Common myeloid progenitor, CD34-positive (primary cell): ENCODE measurements at regions of chr2 and their contacts with region 1.

Region 1: GRCh38 chr2:229586746-229587705 is 127.3 kb downstream of the DNER start:
- DNase-seq: peak; percentile 17 to 49 (median 32)
- H3K4me3 ChIP-seq: no peak overlapping the region
- H3K27ac ChIP-seq: no peak overlapping the region
- H3K4me1 ChIP-seq: no peaks in the 10 kb centered on the region
- H3K27me3 ChIP-seq: peaks cover 0 to 15% (median 11%) of the 10 kb centered on the region in 5 experiments

Region 2: DNA sequence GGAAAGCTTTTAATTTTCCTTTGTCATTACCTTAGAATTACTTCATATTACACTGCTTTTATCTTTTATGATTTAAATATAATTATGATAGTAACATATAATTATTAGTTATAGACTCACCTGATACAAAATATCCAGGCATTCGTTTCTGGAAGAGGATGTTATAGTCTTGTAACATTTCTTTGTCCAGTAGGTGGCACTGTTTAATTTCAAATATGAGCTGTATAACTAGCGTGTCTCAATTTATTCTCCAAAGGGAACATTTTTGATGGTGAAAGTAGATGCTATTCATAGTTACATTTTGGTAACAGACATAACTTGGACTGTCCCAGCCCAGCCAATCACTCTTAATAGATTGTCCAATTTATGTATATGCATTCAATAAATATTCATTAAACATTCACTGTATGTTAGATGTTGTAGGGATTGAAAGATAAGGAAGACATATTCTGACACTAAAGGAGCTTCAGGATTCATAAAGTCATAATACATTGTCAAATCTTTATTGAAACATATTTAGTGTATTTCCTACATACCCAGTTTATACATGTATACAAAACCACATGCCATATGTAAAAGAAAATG is 1696.4 kb before region 1 on chr2:
- CTCF ChIA-PET with region 1: interaction called, 11 read pairs
- POLR2A ChIA-PET with region 1: no interaction called
- DNase-seq: peak; percentile 32 to 61 (median 50)
- H3K4me3 ChIP-seq: no peak overlapping the region
- H3K27ac ChIP-seq: no peak overlapping the region
- H3K4me1 ChIP-seq: no peaks in the 10 kb centered on the region
- H3K27me3 ChIP-seq: peaks cover 0 to 2% (median 0%) of the 10 kb centered on the region in 5 experiments

Region 3: DNA sequence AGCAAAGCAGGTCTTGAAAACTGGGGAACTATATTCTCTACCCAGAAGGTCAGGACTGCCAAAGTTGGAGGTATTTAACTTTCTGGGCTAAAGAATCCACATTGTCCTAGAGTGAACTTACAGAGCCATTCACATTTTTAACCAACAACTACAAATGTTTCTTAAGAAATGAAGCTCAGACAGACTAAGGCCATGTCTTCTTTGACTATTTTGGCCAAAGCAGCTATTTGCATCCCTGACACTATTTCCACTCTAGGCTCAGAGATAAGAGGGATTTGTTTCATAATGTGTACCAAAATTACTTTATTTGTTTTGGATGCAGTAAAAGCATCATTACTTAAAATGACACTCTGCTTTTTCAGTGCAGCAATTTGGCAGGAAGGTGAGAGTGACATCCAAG is 334.0 kb before region 1 on chr2:
- CTCF ChIA-PET with region 1: no interaction called
- POLR2A ChIA-PET with region 1: no interaction called
- DNase-seq: no peak
- H3K4me3 ChIP-seq: no peak overlapping the region
- H3K27ac ChIP-seq: no peak overlapping the region
- H3K4me1 ChIP-seq: no peaks in the 10 kb centered on the region
- H3K27me3 ChIP-seq: peaks cover 0 to 2% (median 0%) of the 10 kb centered on the region in 5 experiments

Region 4: DNA sequence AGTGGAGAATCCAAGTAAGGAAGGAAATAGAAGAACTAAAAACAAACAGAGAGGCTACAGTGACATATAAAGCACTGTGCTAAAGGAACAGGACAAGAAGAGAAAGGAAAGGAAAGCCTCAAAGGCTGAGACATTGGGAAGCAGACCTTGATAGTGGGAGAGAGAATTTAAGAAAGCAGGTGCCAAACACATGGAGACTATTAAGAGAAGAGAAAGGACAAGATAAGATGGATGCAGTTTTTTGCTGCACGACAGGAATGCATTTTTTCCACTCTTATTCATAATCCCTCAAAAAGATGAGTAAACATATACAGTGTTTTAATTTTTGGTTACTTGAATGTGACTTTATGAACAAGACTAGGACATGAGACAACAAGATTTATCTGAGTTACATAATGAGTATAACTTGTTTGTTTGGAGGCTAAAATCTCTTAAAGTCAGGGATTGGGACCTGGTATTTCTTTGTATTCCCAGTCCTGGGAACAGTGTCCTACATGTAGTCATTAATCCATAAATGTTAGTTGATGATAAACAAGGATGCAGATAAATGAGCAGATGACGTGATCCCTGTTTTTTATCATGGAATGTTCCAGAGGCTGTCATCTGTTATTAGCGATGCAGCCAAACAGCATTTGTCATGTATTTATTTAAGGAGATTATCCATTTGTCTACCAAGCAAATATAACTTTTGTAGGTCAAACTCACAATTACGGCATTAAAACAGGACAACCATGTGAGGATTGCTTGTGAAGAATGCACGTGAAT is 14.3 kb before region 1 on chr2:
- CTCF ChIA-PET with region 1: no interaction called
- POLR2A ChIA-PET with region 1: no interaction called
- DNase-seq: no peak
- H3K4me3 ChIP-seq: no peak overlapping the region
- H3K27ac ChIP-seq: no peak overlapping the region
- H3K4me1 ChIP-seq: no peaks in the 10 kb centered on the region
- H3K27me3 ChIP-seq: peaks cover 0 to 10% (median 2%) of the 10 kb centered on the region in 5 experiments